Activated CD4-positive, alpha-beta memory T cell treated with anti-CD3 and anti-CD28 coated beads for 36 hours (primary cell): ENCODE measurements at regions of chr10 and their contacts with region 1.

Region 1: DNA sequence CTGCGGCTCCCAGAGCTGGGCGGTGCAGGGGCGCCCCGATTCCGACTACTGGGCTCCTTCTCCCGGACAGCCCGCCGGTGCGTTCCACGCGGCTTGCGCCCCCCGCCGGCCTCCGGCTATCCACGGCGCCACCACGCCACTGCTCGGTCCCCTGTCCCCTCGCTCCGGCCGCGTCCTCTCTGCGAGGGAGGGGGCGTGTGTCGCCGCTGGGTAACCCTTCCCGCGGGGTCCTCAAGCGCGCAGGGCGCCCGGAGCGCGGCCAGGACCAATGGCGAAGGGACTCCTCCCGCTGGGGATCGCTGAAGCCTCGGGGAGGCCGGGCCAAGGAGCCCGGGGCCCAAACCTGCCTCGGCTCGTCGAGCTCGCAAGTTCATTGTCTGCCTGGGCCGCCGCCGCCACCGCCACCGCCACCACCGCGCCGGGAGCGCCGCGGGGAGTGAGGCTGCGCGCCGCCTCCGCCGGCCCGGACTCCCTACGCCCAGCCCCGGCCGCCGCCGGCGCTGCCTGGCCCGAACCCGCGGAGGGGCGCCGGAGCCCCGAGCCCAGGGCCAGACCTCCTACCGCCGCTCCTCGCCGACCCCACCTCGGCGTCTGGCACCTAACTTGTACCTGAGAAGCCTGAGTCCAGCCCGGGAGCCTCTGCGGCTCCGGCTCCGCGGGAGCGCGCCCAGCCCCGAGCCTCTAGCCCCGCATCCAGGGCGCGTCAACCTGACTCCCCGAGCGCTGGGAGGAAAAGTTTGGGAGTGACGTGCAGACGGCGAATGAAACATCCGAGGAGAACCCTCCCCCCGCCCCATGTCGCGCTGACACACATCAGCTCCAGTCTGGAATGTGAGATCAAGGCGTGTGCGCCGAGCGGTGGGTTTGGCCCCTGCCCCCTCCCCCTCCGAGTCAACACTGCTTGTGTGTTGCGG is at the start of gene CHST15:
- DNase-seq: no peak
- H3K4me3 Mint-ChIP-seq: peak within 1 kb of the TSS; percentile 29
- H3K27ac Mint-ChIP-seq: no peak within 1 kb of the TSS
- H3K4me1 Mint-ChIP-seq: no peaks in the 10 kb centered on the region
- H3K27me3 Mint-ChIP-seq: peaks cover 49% of the 10 kb centered on the region
- total RNA-seq, gene CHST15: 0.05 to 0.12 TPM

Region 2: GRCh38 chr10:123147635-123148413 is 945.3 kb before region 1 on chr10 and contains the start of gene HMX2:
- CTCF ChIA-PET with region 1: no interaction called
- POLR2A ChIA-PET with region 1: no interaction called
- intact Hi-C with region 1: loop called (anchors 10 kb)
- DNase-seq: peak; percentile 64
- H3K4me3 Mint-ChIP-seq: peak within 1 kb of the TSS; percentile 58
- H3K27ac Mint-ChIP-seq: peak within 1 kb of the TSS; percentile 39
- H3K4me1 Mint-ChIP-seq: peaks cover 49% of the 10 kb centered on the region
- H3K27me3 Mint-ChIP-seq: peaks cover 58% of the 10 kb centered on the region
- total RNA-seq, gene HMX2: 0.31 to 0.43 TPM

Region 3: GRCh38 chr10:124079864-124080263 is 13.3 kb before region 1 on chr10:
- CTCF ChIA-PET with region 1: no interaction called
- POLR2A ChIA-PET with region 1: no interaction called
- intact Hi-C with region 1: no loop called
- DNase-seq: no peak
- H3K4me3 Mint-ChIP-seq: no peak overlapping the region
- H3K27ac Mint-ChIP-seq: no peak overlapping the region
- H3K4me1 Mint-ChIP-seq: no peaks in the 10 kb centered on the region
- H3K27me3 Mint-ChIP-seq: peaks cover 3% of the 10 kb centered on the region

Region 4: DNA sequence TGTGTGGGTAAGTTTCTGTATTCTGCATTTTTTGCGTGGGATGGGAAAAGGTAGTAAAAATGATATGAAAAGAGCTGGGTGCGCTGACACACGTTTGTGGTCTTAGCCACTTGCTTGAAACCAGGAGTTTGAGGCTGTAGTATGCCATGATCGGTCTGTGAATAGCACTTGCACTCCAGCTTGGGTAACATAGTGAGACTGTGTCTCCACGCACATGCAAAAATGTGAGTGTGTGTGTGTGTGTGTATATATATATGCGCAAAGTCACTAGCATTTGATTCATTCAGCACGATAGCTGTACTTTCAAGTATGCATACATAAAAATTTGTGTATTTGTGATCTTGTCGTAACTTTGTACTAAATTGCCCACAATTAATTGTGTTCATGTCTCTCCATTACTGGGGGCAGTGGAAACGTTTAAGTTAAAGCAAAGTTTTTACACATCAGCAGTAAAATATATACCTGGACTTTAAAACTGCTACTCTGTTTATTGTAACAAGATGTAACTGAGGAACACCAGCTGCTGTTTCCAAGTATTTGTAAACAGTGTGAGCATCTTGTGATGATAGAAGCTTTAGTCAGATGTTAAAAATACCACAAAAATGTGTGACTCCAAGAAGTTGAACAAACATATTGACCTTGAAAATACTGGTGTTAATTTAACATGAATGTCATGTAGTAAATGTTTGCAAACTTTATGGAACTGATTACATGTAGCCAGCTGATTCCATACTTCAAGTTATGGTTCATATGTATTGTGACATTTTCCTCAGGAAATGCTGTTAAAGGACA is 850.4 kb after region 1 on chr10:
- CTCF ChIA-PET with region 1: no interaction called
- POLR2A ChIA-PET with region 1: no interaction called
- intact Hi-C with region 1: no loop called
- DNase-seq: no peak
- H3K4me3 Mint-ChIP-seq: no peak overlapping the region
- H3K27ac Mint-ChIP-seq: no peak overlapping the region
- H3K4me1 Mint-ChIP-seq: peaks cover 56% of the 10 kb centered on the region
- H3K27me3 Mint-ChIP-seq: no peaks in the 10 kb centered on the region